Motor neuron (in vitro differentiated cells): ENCODE measurements at regions of chr16 and their contacts with region 1.

Region 1: GRCh38 chr16:59527206-59527997 is 793.3 kb upstream of the GOT2 start:
- ATAC-seq: peak in 1 of 8 experiments; percentile 65
- H3K4me3 ChIP-seq: no peak overlapping the region
- H3K27ac ChIP-seq: no peak overlapping the region
- H3K4me1 ChIP-seq: no peaks in the 10 kb centered on the region

Region 2: GRCh38 chr16:59459806-59460205 is 67.6 kb before region 1 on chr16:
- in situ Hi-C with region 1: loop called in 1 of 9 experiments (anchors 10 kb)
- ATAC-seq: no peak
- H3K4me3 ChIP-seq: no peak overlapping the region
- H3K27ac ChIP-seq: no peak overlapping the region
- H3K4me1 ChIP-seq: peaks cover 3 to 5% of the 10 kb centered on the region in 2 donors